MCF 10A (cell line): ENCODE measurements at regions of chr16 and their contacts with region 1.

Region 1: DNA sequence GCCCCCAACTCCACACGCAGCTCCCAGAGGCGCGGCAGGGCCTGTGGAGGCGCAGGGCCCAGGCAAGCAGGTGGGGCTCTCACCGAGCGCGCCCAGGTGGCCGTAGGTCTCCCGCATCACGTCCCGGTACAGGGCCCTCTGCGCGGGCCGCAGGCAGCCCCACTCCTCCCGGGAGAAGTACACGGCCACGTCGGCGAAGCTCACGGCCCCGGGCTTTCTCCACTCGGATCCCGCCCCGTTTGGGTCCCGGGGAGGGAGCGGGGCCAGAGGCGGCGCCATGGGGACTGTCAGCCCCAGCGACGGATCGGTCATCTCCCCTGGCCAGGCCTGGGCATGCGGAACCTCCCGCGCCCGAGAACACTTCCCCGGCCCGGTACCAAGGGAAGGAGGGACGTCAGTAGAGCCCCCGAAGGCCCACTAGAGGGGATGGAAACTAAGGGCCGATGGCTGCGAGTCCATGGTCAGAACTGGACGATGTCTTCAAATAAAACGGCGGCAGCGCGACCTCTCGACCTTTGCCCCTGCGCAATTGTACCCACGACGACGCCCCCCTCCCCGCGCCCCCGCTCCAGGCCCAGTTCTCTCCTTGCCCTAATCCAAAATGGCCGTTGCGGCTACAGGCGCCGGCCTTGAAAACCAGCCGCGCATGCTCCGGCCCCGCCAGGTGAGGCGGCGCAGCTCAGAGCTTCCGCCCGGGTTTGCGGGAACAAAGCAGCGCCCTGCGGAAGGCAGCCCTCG is at the start of gene ZNF747:
- DNase-seq: peak; percentile 86
- H3K4me3 Mint-ChIP-seq: peak within 1 kb of the TSS; percentile 91
- H3K27ac Mint-ChIP-seq: peak within 1 kb of the TSS; percentile 95
- H3K4me1 Mint-ChIP-seq: peaks cover 6% of the 10 kb centered on the region
- H3K27me3 Mint-ChIP-seq: no peaks in the 10 kb centered on the region
- CTCF ChIP-seq: no peak
- total RNA-seq, gene ZNF747: 13.7 TPM in 2 replicates

Region 2: GRCh38 chr16:30445408-30446202 is 88.9 kb before region 1 on chr16 and contains the start of gene SEPHS2:
- CTCF ChIA-PET with region 1: interaction called, 12 read pairs
- POLR2A ChIA-PET with region 1: interaction called, 18 read pairs
- intact Hi-C with region 1: no loop called
- DNase-seq: peak; percentile 99
- H3K4me3 Mint-ChIP-seq: peak within 1 kb of the TSS; percentile 80
- H3K27ac Mint-ChIP-seq: peak within 1 kb of the TSS; percentile 90
- H3K4me1 Mint-ChIP-seq: peaks cover 17% of the 10 kb centered on the region
- H3K27me3 Mint-ChIP-seq: no peaks in the 10 kb centered on the region
- CTCF ChIP-seq: peak; percentile 11
- total RNA-seq, gene SEPHS2: 51.9 and 73.3 TPM in 2 replicates

Region 3: GRCh38 chr16:30557957-30558788 is 23.6 kb after region 1 on chr16 and contains the start of gene ZNF764:
- CTCF ChIA-PET with region 1: interaction called, 28 read pairs
- POLR2A ChIA-PET with region 1: interaction called, 104 read pairs
- intact Hi-C with region 1: loop called (anchors 1 kb)
- DNase-seq: peak; percentile 99
- H3K4me3 Mint-ChIP-seq: peak within 1 kb of the TSS; percentile 77
- H3K27ac Mint-ChIP-seq: peak within 1 kb of the TSS; percentile 79
- H3K4me1 Mint-ChIP-seq: peaks cover 5% of the 10 kb centered on the region
- H3K27me3 Mint-ChIP-seq: no peaks in the 10 kb centered on the region
- CTCF ChIP-seq: no peak
- total RNA-seq, gene ZNF764: 8.3 and 10.6 TPM in 2 replicates

Region 4: GRCh38 chr16:30585400-30586189 is 51.1 kb after region 1 on chr16 and contains the start of gene ZNF785:
- CTCF ChIA-PET with region 1: interaction called, 5 read pairs
- POLR2A ChIA-PET with region 1: interaction called, 36 read pairs
- intact Hi-C with region 1: loop called (anchors 2 kb)
- DNase-seq: peak; percentile 100
- H3K4me3 Mint-ChIP-seq: peak within 1 kb of the TSS; percentile 96
- H3K27ac Mint-ChIP-seq: peak within 1 kb of the TSS; percentile 78
- H3K4me1 Mint-ChIP-seq: no peaks in the 10 kb centered on the region
- H3K27me3 Mint-ChIP-seq: no peaks in the 10 kb centered on the region
- CTCF ChIP-seq: no peak
- total RNA-seq, gene ZNF785: 12.8 and 16.3 TPM in 2 replicates

Region 5: GRCh38 chr16:30628627-30629540 is 94.3 kb after region 1 on chr16:
- CTCF ChIA-PET with region 1: interaction called, 9 read pairs
- POLR2A ChIA-PET with region 1: interaction called, 12 read pairs
- intact Hi-C with region 1: no loop called
- DNase-seq: peak; percentile 87
- H3K4me3 Mint-ChIP-seq: no peak overlapping the region
- H3K27ac Mint-ChIP-seq: no peak overlapping the region
- H3K4me1 Mint-ChIP-seq: peaks cover 6% of the 10 kb centered on the region
- H3K27me3 Mint-ChIP-seq: no peaks in the 10 kb centered on the region
- CTCF ChIP-seq: peak; percentile 84

Region 6: GRCh38 chr16:30829130-30830071 is 294.9 kb after region 1 on chr16:
- CTCF ChIA-PET with region 1: no interaction called
- POLR2A ChIA-PET with region 1: no interaction called
- intact Hi-C with region 1: no loop called
- DNase-seq: no peak
- H3K4me3 Mint-ChIP-seq: no peak overlapping the region
- H3K27ac Mint-ChIP-seq: no peak overlapping the region
- H3K4me1 Mint-ChIP-seq: no peaks in the 10 kb centered on the region
- H3K27me3 Mint-ChIP-seq: peaks cover 29% of the 10 kb centered on the region
- CTCF ChIP-seq: no peak